Activated T-helper 1 cell treated with anti-CD3 and anti-CD28 coated beads, Interleukin-12 subunit alpha, Interleukin-12 subunit beta, Interleukin-2, Interleukin-4 antibody, amounts not matched to agents 30 ng/mL and 10 ng/mL and 1 ng/mL, durations not matched to agents 14 hours and 24 hours and 36 hours (primary cell): ENCODE measurements at regions of chr5 and their contacts with region 1.

Region 1: DNA sequence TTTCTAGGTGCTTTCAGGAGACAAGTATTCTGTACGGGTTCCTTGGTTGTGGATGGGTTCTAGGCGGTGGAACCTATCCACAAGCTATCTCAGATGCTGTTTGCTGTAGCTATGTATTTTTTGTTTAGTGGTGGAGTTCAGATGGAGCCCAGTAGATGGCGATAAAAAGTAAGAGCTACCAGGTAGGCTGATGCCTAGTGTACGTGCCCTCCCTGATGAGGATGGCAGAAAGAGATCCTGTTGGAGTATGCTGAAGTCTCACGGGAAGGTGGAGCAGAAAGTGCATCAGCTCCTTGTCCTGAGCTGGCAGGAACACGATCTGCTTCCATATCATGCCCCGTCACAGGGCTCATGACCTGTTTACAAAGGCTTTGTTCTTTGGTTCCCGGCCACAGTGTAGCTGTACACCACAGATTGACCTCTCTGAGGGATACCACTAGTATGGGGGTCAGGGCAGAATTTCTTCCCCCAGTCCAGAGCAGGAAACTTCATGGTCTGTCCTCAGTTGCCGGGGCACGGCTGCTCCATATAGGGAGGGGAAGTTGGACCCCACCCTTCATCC is 12.6 kb upstream of the UGT3A2 start:
- DNase-seq: no peak
- H3K4me3 Mint-ChIP-seq: no peak overlapping the region
- H3K27ac Mint-ChIP-seq: no peak overlapping the region
- H3K4me1 Mint-ChIP-seq: no peaks in the 10 kb centered on the region
- H3K27me3 Mint-ChIP-seq: peaks cover 32% of the 10 kb centered on the region

Region 2: DNA sequence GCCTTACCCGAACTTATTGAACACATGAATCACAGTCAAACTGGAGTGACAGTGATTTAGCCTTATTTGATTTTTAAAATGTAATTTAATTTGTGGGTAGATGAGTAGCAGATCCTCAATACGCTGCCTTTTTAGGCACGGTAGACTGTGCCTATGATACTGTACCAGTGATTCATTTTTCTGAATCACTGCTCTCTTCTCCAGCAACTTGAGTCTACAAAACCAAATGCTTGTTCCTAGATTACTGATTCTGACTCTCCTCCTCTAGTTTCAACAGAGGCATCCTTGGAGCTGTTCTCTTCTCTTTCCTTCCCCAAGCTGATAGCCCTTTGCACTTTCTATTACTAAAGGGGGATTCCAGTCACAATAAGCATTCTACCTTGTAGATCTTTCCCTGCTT is 316.9 kb before region 1 on chr5:
- intact Hi-C with region 1: no loop called
- DNase-seq: no peak
- H3K4me3 Mint-ChIP-seq: no peak overlapping the region
- H3K27ac Mint-ChIP-seq: no peak overlapping the region
- H3K4me1 Mint-ChIP-seq: peaks cover 11% of the 10 kb centered on the region
- H3K27me3 Mint-ChIP-seq: peaks cover 2% of the 10 kb centered on the region

Region 3: GRCh38 chr5:35990941-35991611 is 88.2 kb before region 1 on chr5 and contains the start of gene UGT3A1:
- intact Hi-C with region 1: no loop called
- DNase-seq: no peak
- H3K4me3 Mint-ChIP-seq: no peak within 1 kb of the TSS
- H3K27ac Mint-ChIP-seq: no peak within 1 kb of the TSS
- H3K4me1 Mint-ChIP-seq: no peaks in the 10 kb centered on the region
- H3K27me3 Mint-ChIP-seq: peaks cover 3% of the 10 kb centered on the region
- total RNA-seq, gene UGT3A1: not detected in 2 replicates

Region 4: DNA sequence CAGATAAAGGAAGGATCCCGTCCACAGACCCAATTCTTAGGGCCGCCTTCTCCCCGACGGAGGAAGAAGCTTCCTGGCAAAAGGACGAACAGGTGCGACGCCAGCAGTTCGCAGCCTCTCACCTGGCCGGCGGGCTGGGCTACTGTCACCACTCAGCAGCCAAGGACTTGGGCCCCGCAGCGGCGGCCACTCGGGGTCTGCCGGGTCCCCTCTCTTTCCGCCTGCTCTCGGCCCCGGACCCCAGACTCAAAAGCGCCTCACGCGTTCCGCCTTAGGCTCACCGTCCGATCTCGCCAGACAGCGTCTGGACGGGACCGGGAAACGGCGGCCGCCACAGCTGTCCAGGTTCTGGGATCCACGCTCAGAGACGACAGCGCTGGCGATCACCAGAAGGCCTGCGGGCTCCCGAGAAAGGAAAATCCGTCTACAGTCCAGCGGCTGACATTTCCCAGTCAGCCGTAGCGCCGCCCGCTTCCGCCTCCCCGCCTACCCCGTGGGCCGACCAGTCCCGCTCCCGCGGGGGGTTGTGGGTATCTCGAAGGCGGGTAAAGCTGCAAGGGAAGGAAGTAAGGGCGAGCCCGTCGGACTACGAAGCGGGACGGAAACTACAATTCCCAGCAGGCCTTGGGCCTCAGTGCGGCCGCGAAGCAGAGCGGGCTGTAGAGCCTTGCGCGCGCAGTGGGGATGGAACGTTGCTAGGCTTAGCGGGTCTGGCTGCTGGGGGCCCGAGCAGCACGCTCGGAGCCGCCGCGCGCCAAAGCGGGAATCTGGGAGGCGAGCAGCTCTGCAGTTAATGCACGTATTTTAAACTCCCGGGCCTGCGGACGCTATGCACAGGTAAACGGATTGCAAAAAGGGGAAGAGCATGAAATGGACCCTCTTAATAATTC is 72.4 kb after region 1 on chr5 and contains the starts of genes LMBRD2 and SKP2:
- intact Hi-C with region 1: loop called (anchors 1 kb)
- DNase-seq: peak; percentile 97
- H3K4me3 Mint-ChIP-seq: peak within 1 kb of the TSS; percentile 97
- H3K27ac Mint-ChIP-seq: peak within 1 kb of the TSS; percentile 79
- H3K4me1 Mint-ChIP-seq: peaks cover 59% of the 10 kb centered on the region
- H3K27me3 Mint-ChIP-seq: no peaks in the 10 kb centered on the region
- total RNA-seq, gene LMBRD2: 8.9 and 12.3 TPM in 2 replicates
- total RNA-seq, gene SKP2: 54.6 and 61.2 TPM in 2 replicates

Region 5: DNA sequence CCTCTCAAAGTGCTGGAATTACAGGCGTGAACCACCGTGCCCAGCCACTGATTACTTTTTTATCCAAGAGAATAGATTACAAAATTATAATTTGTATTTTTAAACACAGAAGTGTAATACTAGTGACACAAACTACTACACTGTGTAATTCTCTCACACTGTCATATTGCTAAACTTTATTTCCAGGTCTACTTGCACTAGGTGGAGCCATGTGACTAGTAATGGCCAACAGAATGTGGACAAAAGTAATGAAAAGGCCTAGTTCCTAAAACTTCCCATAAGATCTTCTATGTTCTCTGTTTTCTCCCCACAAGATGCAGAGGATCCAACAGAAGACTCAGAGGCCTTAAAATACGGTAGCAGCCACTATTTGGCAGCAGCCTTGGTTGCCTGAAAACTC is 135.2 kb after region 1 on chr5:
- intact Hi-C with region 1: no loop called
- DNase-seq: no peak
- H3K4me3 Mint-ChIP-seq: no peak overlapping the region
- H3K27ac Mint-ChIP-seq: no peak overlapping the region
- H3K4me1 Mint-ChIP-seq: no peaks in the 10 kb centered on the region
- H3K27me3 Mint-ChIP-seq: no peaks in the 10 kb centered on the region

Region 6: DNA sequence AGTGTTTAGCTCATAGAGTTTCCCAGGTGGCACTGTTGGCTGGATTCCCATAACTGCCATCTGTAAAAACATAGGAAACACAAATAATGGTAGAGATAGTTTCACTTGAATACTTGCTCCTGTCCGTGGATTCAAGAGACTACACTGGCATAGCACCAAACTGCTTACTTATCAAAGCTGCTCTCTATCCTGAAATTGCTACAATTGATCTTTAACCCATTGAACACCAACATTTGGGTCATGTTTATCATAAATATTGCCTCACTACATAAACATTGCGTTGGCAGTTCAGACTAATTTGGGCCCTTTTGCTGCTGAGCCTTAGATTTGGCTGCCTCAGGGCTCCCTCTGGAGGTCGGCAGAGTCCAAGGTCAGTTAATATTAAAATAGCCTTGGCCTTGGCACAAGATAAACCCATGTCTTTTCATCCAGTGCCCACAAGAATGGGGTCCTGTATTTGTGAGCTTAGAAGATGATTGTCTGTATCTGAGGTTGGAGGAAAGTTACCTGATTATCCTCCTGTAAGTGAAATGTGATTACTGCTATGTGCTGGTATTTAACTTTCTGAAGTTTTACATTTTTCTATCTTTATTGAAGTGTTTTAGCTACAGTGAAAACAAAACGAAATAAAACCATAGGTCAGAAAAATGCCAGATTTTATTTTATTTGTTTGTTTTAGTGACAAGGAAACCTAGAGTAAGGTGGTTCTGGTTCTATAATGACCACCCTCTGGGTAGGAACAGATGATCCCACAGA is 226.5 kb after region 1 on chr5:
- intact Hi-C with region 1: loop called (anchors 1 kb)
- DNase-seq: no peak
- H3K4me3 Mint-ChIP-seq: no peak overlapping the region
- H3K27ac Mint-ChIP-seq: no peak overlapping the region
- H3K4me1 Mint-ChIP-seq: no peaks in the 10 kb centered on the region
- H3K27me3 Mint-ChIP-seq: peaks cover 11% of the 10 kb centered on the region

Region 7: DNA sequence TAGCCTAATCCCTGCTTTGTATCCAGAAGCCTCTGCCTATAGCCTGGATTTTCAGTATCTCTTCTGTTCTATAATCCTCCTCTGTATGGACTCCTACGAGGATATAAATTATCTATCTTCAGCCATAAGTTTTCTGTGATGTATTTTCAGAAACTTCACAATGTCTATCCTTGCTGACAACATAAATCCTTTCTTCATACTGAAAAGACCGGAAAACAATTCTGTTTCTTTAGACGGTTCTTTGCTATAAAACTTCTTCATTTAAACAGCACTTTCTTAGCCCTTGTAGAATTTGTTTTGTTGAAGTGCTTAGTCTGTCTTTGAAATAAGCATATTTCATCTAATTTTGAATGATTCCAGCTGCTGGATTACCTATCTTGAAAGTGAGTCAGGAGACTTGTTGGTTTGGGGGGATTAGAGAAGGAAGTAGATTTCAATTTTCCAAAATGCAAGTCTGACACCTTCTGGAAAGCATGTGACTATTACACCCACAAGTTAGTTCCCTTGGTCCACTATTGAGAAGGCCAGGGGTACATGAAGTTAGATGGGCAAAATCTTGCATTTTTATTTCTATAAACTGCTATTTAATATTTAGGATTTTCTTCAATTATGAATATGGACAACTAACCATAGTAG is 318.7 kb after region 1 on chr5:
- intact Hi-C with region 1: loop called (anchors 10 kb)
- DNase-seq: no peak
- H3K4me3 Mint-ChIP-seq: no peak overlapping the region
- H3K27ac Mint-ChIP-seq: no peak overlapping the region
- H3K4me1 Mint-ChIP-seq: no peaks in the 10 kb centered on the region
- H3K27me3 Mint-ChIP-seq: peaks cover 17% of the 10 kb centered on the region

Region 8: DNA sequence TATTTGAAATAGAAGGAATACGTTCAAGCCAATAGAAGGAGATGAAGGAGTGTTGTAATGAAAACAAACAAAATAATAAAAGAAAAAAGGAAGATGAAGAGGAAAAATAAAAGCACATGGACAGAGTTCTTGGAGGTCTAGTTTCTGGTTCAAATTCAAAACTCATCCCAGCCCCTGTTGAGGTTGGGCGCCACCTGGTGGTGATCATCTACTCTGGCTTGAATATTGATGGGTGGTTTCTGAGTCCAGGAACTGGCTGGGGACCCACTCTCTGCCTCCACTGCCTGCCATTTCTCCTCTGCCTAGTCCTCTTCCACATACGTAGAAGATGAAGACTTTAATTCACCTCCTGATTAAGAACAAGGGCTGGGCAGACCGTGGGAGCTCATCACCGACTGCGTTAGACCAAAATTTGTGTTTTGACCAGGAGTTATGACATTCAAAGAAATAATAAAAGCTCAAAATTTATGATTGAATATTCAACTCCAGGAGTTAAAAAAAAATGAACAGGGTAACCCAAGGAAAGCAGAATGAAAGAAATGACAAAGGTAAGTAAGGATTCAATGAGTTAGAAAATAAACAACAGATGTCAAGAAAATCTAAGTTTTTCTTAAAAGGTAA is 428.2 kb after region 1 on chr5:
- intact Hi-C with region 1: loop called (anchors 1 kb)
- DNase-seq: peak; percentile 47
- H3K4me3 Mint-ChIP-seq: no peak overlapping the region
- H3K27ac Mint-ChIP-seq: no peak overlapping the region
- H3K4me1 Mint-ChIP-seq: no peaks in the 10 kb centered on the region
- H3K27me3 Mint-ChIP-seq: peaks cover 9% of the 10 kb centered on the region

Region 9: DNA sequence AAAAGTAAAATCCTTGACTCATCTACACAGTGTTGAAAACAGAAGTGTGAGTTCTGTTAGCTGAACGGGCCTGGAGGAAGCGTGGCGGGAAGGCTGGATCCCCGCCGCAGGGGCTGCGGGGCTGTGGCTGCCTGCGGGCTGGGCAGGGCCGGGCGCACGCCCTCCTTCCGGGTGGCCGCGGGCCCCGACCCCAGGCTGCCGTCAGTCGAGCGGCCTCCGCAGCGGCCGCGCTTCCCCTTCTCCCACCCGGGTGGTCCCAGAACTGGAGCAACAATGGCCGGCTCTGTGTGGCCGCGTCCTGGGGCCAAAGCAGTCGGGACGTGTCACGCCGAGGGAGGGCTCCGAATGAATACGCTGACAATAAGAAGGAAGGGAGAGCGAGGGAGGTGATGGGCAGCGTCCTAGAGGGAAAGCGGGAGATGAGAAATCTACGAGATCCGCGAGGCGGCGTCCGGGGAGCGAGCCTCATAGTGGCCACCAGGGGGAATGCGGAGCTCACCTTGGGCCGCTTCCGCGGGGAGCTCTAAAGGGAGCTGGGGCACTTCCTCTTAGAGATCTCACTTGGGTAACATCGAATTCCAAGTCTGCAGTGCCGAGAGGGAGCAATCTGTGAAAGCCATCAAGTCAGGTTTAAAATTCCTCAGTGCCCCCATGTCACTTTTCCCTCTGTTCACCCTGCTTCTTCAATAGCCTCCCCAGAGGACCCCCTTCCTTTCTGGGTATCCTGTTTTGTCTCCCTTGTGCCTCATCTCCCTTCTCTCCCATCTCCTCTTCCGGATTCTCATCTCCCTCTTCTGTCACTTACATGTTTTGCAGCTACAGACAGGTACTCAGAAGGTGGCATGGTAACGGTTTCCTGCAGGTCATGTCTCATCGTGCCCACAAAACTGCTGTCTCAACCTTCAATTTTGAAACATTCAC is 611.0 kb after region 1 on chr5:
- intact Hi-C with region 1: loop called (anchors 1 kb)
- DNase-seq: peak; percentile 38
- H3K4me3 Mint-ChIP-seq: peak overlapping the region; percentile 62
- H3K27ac Mint-ChIP-seq: no peak overlapping the region
- H3K4me1 Mint-ChIP-seq: peaks cover 11% of the 10 kb centered on the region
- H3K27me3 Mint-ChIP-seq: peaks cover 6% of the 10 kb centered on the region

Region 10: DNA sequence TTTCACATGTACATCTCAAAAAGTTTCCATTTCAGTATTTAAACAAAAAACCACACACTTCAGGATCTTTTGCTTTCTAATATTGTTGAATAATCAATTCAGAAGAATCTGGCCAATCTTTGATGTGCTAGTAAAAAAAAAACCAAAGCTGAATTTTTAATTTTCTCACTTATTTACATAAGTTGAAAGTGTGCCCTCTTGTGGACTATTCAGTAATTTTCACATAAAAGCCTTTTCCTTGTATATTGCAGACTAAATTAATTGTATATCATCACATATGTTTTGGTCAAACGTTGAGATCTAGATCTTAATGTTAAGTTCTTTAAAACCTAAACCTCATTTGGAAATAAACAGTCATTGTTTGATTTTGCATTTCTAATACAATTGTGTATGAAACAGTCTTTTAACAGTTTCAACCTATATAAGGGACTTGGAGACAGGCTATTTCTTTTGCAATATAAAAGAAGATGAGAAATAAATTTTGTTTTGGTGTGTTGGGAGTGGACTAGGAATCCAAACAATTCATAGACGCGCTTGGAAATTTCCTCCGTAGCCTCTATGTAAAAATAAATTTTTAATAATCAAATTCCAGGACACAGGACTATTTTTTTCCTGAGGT is 865.4 kb after region 1 on chr5:
- intact Hi-C with region 1: no loop called
- DNase-seq: no peak
- H3K4me3 Mint-ChIP-seq: no peak overlapping the region
- H3K27ac Mint-ChIP-seq: no peak overlapping the region
- H3K4me1 Mint-ChIP-seq: peaks cover 5% of the 10 kb centered on the region
- H3K27me3 Mint-ChIP-seq: no peaks in the 10 kb centered on the region